Activated T-helper 2 cell treated with anti-CD3 and anti-CD28 coated beads, Interferon-gamma antibody, Interleukin-2, Interleukin-4, amounts not matched to agents 10 μg/mL and 5 μg/mL and 100 μg/mL, durations not matched to agents 14 hours and 24 hours and 36 hours (primary cell): ENCODE measurements at regions of chr20 and their contacts with region 1.

Region 1: DNA sequence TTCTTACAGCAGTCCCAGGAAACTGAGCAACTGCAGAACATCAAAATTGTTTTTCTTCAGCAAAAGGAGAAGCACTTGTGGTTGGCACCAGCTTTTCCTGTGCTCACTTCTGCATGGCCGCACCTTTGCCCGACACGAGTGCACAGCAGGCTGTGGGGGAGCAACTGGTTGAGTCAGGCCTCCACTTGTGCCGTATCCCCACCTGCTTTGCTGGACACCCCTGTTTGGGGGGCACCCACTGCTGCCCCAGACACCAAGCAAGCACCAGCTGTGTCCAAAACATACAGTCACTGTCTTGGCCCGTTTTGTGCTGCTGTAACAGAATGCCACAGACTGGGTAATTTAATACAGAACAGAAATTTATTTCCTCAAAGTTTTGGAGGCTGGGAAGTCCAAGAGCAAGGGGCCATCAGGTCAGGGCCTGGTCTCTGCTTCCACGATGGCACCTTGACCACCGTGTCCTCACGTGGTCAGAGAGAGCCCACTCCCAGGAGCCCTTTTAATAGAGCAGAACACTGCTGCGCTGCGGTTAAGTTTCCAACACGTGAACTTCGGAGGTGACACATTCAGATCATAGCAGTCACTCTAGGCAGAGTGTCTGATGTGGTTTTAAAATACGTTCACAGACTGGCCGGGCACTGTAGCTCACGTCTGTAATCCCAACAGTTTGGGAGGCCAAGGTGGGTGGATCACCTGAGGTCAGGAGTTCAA is 8.7 kb upstream of the GMEB2 start:
- DNase-seq: peak; percentile 76
- H3K4me3 Mint-ChIP-seq: peak overlapping the region; percentile 45
- H3K27ac Mint-ChIP-seq: peak overlapping the region; percentile 93
- H3K4me1 Mint-ChIP-seq: peaks cover 45% of the 10 kb centered on the region
- H3K27me3 Mint-ChIP-seq: no peaks in the 10 kb centered on the region

Region 2: GRCh38 chr20:63567386-63568169 is 68.0 kb before region 1 on chr20:
- intact Hi-C with region 1: loop called (anchors 5 kb)
- DNase-seq: peak; percentile 56
- H3K4me3 Mint-ChIP-seq: peak overlapping the region; percentile 52
- H3K27ac Mint-ChIP-seq: peak overlapping the region; percentile 17
- H3K4me1 Mint-ChIP-seq: peaks cover 12% of the 10 kb centered on the region
- H3K27me3 Mint-ChIP-seq: peaks cover 3% of the 10 kb centered on the region

Region 3: GRCh38 chr20:63739130-63740069 is 103.8 kb after region 1 on chr20 and contains the start of gene SLC2A4RG:
- intact Hi-C with region 1: loop called (anchors 5 kb)
- DNase-seq: peak; percentile 72
- H3K4me3 Mint-ChIP-seq: peak within 1 kb of the TSS; percentile 13
- H3K27ac Mint-ChIP-seq: no peak within 1 kb of the TSS
- H3K4me1 Mint-ChIP-seq: peaks cover 12% of the 10 kb centered on the region
- H3K27me3 Mint-ChIP-seq: no peaks in the 10 kb centered on the region
- total RNA-seq, gene SLC2A4RG: 48.3 and 53.0 TPM in 2 replicates

Region 4: GRCh38 chr20:64062596-64063388 is 427.2 kb after region 1 on chr20 and contains the start of gene TCEA2:
- intact Hi-C with region 1: loop called (anchors 10 kb)
- DNase-seq: peak; percentile 93
- H3K4me3 Mint-ChIP-seq: peak within 1 kb of the TSS; percentile 89
- H3K27ac Mint-ChIP-seq: peak within 1 kb of the TSS; percentile 88
- H3K4me1 Mint-ChIP-seq: peaks cover 46% of the 10 kb centered on the region
- H3K27me3 Mint-ChIP-seq: no peaks in the 10 kb centered on the region
- total RNA-seq, gene TCEA2: 49.0 and 49.9 TPM in 2 replicates